ENCODE measurements at regions of chr5 and their contacts with region 1.

Region 1: GRCh38 chr5:34915139-34915855 is at the starts of genes BRIX1 and RAD1:
- DNase-seq: peak; percentile 96
- H3K4me3 ChIP-seq: peak within 1 kb of the TSS; percentile 86
- H3K27ac ChIP-seq: peak within 1 kb of the TSS; percentile 79
- H3K4me1 ChIP-seq: peaks cover 27% of the 10 kb centered on the region
- CTCF ChIP-seq: no peak
- total RNA-seq, gene BRIX1: 59.7 and 75.6 TPM in 2 replicates
- total RNA-seq, gene RAD1: 58.4 and 82.1 TPM in 2 replicates

Region 2: GRCh38 chr5:34826347-34826746 is 89.0 kb before region 1 on chr5:
- CTCF ChIA-PET with region 1: no interaction called
- POLR2A ChIA-PET with region 1: interaction called, 22 read pairs
- intact Hi-C with region 1: loop called (anchors 2 kb)
- DNase-seq: no peak
- H3K4me3 ChIP-seq: no peak overlapping the region
- H3K27ac ChIP-seq: no peak overlapping the region
- H3K4me1 ChIP-seq: peaks cover 30% of the 10 kb centered on the region
- CTCF ChIP-seq: no peak

Region 3: GRCh38 chr5:34881246-34881645 is 34.1 kb before region 1 on chr5:
- CTCF ChIA-PET with region 1: no interaction called
- POLR2A ChIA-PET with region 1: no interaction called
- intact Hi-C with region 1: no loop called
- DNase-seq: no peak
- H3K4me3 ChIP-seq: no peak overlapping the region
- H3K27ac ChIP-seq: no peak overlapping the region
- H3K4me1 ChIP-seq: no peaks in the 10 kb centered on the region
- CTCF ChIP-seq: no peak

Region 4: DNA sequence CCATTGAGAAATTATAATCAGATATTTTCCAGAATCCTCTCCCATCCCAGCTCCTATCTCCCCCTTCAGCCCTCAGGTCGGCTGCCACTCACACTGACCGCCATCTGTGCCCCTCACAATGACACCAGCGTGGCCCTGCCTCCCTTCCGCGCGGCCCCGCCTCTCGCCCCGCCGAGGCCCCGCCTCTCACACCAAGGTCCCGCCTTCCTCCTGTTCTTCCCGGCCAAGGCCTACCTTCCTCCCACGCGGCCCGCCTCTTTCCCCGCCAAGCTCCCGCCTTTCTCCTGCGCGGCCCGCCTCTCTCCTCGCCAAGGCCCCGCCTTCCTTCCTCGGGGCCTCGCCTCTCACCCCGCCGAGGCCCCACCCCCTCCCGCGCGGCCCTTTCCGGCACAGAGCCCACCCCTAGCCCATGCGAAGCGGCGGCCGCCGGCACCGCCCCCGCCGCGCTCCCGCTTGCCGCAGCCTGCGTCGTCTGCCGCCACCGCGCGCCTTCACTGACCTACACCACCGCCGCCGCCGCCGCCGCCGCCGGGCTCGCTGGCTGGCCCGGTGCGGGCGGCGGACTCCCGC is 13.9 kb after region 1 on chr5 and contains the start of gene DNAJC21:
- CTCF ChIA-PET with region 1: interaction called, 9 read pairs
- POLR2A ChIA-PET with region 1: interaction called, 102 read pairs
- intact Hi-C with region 1: loop called (anchors 1 kb)
- DNase-seq: peak; percentile 96
- H3K4me3 ChIP-seq: peak within 1 kb of the TSS; percentile 83
- H3K27ac ChIP-seq: peak within 1 kb of the TSS; percentile 46
- H3K4me1 ChIP-seq: peaks cover 38% of the 10 kb centered on the region
- CTCF ChIP-seq: no peak
- total RNA-seq, gene DNAJC21: 29.4 and 43.7 TPM in 2 replicates

Region 5: GRCh38 chr5:35213611-35214010 is 298.3 kb after region 1 on chr5:
- CTCF ChIA-PET with region 1: no interaction called
- POLR2A ChIA-PET with region 1: no interaction called
- intact Hi-C with region 1: no loop called
- DNase-seq: no peak
- H3K4me3 ChIP-seq: no peak overlapping the region
- H3K27ac ChIP-seq: no peak overlapping the region
- H3K4me1 ChIP-seq: no peaks in the 10 kb centered on the region
- CTCF ChIP-seq: no peak

Region 6: GRCh38 chr5:36151434-36152323 is 1236.4 kb after region 1 on chr5 and contains the starts of genes LMBRD2 and SKP2:
- CTCF ChIA-PET with region 1: no interaction called
- POLR2A ChIA-PET with region 1: no interaction called
- intact Hi-C with region 1: loop called (anchors 5 kb)
- DNase-seq: peak; percentile 98
- H3K4me3 ChIP-seq: peak within 1 kb of the TSS; percentile 85
- H3K27ac ChIP-seq: peak within 1 kb of the TSS; percentile 64
- H3K4me1 ChIP-seq: peaks cover 23% of the 10 kb centered on the region
- CTCF ChIP-seq: no peak
- total RNA-seq, gene LMBRD2: 9.1 and 32.0 TPM in 2 replicates
- total RNA-seq, gene SKP2: 70.5 and 71.8 TPM in 2 replicates

Measured in OCI-LY7 (cell line).